ENCODE measurements at regions of chr1 and their contacts with region 1.

Region 1: GRCh38 chr1:84603941-84604830 is 29.9 kb upstream of the CTBS start:
- DNase-seq: peak; percentile 97
- ATAC-seq: peak; percentile 88
- H3K4me3 ChIP-seq: peak overlapping the region; percentile 39 to 63
- H3K27ac ChIP-seq: peak overlapping the region; percentile 82
- H3K4me1 ChIP-seq: peaks cover 48% of the 10 kb centered on the region
- H3K27me3 ChIP-seq: no peaks in the 10 kb centered on the region
- CTCF ChIP-seq: peak; percentile 100

Region 2: DNA sequence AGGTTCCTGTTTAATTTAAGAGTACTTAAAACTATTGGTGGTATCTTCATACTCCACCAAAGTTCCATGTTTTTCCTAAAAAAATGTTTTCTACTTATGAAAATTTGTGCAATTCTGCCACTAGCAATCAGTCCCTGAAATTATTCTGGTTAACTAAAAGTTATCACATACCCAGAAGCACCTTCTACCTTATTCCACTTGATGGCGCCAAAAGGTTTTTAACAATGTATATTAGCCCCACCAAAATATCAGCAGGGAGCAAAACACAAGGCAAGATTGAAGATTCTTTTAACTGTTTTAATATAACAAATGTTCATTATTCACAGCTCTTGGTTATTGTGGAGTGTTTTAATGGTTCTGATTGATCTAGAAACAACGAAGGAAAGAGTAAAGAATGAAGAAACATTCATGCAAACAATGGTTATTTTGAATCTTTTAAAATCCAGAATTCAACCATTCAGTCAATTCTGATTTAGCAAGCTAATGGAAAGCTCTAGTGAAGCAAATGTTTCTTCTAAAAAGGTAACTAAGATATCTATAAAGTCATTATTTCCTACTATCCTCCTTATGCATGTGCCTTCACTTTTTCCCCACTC is 672.4 kb before region 1 on chr1:
- CTCF ChIA-PET with region 1: no interaction called
- POLR2A ChIA-PET with region 1: no interaction called
- in situ Hi-C with region 1: no loop called
- intact Hi-C with region 1: loop called (anchors 5 kb)
- DNase-seq: peak; percentile 56
- ATAC-seq: peak; percentile 93
- H3K4me3 ChIP-seq: no peak overlapping the region
- H3K27ac ChIP-seq: no peak overlapping the region
- H3K4me1 ChIP-seq: no peaks in the 10 kb centered on the region
- H3K27me3 ChIP-seq: no peaks in the 10 kb centered on the region
- CTCF ChIP-seq: peak; percentile 88; the same call in 1 of the 2 replicates

Region 3: DNA sequence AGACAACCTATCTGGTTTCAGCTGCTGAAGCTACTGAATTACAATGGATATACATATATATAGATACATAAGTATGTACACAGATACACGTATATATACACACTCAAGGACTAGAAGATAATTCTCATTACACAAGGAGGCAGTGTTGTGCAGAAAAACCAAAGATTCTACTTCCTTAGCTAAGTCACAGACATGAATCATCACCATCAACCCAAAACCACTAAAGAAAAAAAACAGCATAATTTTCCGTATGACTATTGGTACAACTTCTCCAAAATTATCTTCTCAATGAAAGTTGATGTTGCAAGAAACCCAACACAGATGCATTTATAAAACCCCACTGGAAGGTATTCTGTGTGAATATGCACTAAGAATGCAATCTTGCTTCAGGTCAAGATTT is 161.9 kb before region 1 on chr1:
- CTCF ChIA-PET with region 1: interaction called, 16 read pairs
- POLR2A ChIA-PET with region 1: interaction called, 9 read pairs
- in situ Hi-C with region 1: no loop called
- intact Hi-C with region 1: loop called (anchors 1 kb)
- DNase-seq: peak; percentile 72
- ATAC-seq: peak; percentile 93
- H3K4me3 ChIP-seq: no peak overlapping the region
- H3K27ac ChIP-seq: no peak overlapping the region
- H3K4me1 ChIP-seq: no peaks in the 10 kb centered on the region
- H3K27me3 ChIP-seq: no peaks in the 10 kb centered on the region
- CTCF ChIP-seq: peak; percentile 59; the same call in 1 of the 2 replicates

Region 4: GRCh38 chr1:84573967-84574842 is 30.0 kb before region 1 on chr1 and contains the start of gene CTBS:
- CTCF ChIA-PET with region 1: interaction called, 4 read pairs
- POLR2A ChIA-PET with region 1: interaction called, 11 read pairs
- in situ Hi-C with region 1: loop called (anchors 5 kb)
- intact Hi-C with region 1: no loop called
- DNase-seq: peak; percentile 74
- ATAC-seq: peak; percentile 97
- H3K4me3 ChIP-seq: peak within 1 kb of the TSS; percentile 66 to 81
- H3K27ac ChIP-seq: peak within 1 kb of the TSS; percentile 98
- H3K4me1 ChIP-seq: peaks cover 33% of the 10 kb centered on the region
- H3K27me3 ChIP-seq: no peaks in the 10 kb centered on the region
- CTCF ChIP-seq: no peak
- total RNA-seq, gene CTBS: 47.7 TPM

Measured in Panc1 (cell line).